PC-9 (cell line): ENCODE measurements at regions of chr21 and their contacts with region 1.

Region 1: GRCh38 chr21:41630249-41630648 is 122.3 kb upstream of the TMPRSS2 start:
- DNase-seq: peak; percentile 87 to 100
- H3K4me3 ChIP-seq: no peak overlapping the region
- H3K27ac ChIP-seq: peak overlapping the region; percentile 94
- H3K4me1 ChIP-seq: peaks cover 50% of the 10 kb centered on the region
- H3K27me3 ChIP-seq: no peaks in the 10 kb centered on the region
- CTCF ChIP-seq: no peak

Region 2: GRCh38 chr21:41431788-41432548 is 198.3 kb before region 1 on chr21:
- CTCF ChIA-PET with region 1: no interaction called
- POLR2A ChIA-PET with region 1: no interaction called
- intact Hi-C with region 1: no loop called
- DNase-seq: no peak
- H3K4me3 ChIP-seq: no peak overlapping the region
- H3K27ac ChIP-seq: no peak overlapping the region
- H3K4me1 ChIP-seq: no peaks in the 10 kb centered on the region
- H3K27me3 ChIP-seq: no peaks in the 10 kb centered on the region
- CTCF ChIP-seq: no peak

Region 3: GRCh38 chr21:41641821-41642701 is 11.8 kb after region 1 on chr21:
- CTCF ChIA-PET with region 1: interaction called, 3 read pairs
- POLR2A ChIA-PET with region 1: no interaction called
- intact Hi-C with region 1: loop called (anchors 1 kb)
- DNase-seq: peak; percentile 58 to 93
- H3K4me3 ChIP-seq: peak overlapping the region; percentile 44; the same call in 1 of the 2 replicates
- H3K27ac ChIP-seq: peak overlapping the region; percentile 100
- H3K4me1 ChIP-seq: peaks cover 75% of the 10 kb centered on the region
- H3K27me3 ChIP-seq: no peaks in the 10 kb centered on the region
- CTCF ChIP-seq: no peak

Region 4: GRCh38 chr21:41684381-41685245 is 54.4 kb after region 1 on chr21:
- CTCF ChIA-PET with region 1: interaction called, 6 read pairs
- POLR2A ChIA-PET with region 1: interaction called, 3 read pairs
- intact Hi-C with region 1: loop called (anchors 1 kb)
- DNase-seq: peak; percentile 69 to 92
- H3K4me3 ChIP-seq: peak overlapping the region; percentile 7; the same call in 1 of the 2 replicates
- H3K27ac ChIP-seq: peak overlapping the region; percentile 99
- H3K4me1 ChIP-seq: peaks cover 77% of the 10 kb centered on the region
- H3K27me3 ChIP-seq: no peaks in the 10 kb centered on the region
- CTCF ChIP-seq: no peak

Region 5: DNA sequence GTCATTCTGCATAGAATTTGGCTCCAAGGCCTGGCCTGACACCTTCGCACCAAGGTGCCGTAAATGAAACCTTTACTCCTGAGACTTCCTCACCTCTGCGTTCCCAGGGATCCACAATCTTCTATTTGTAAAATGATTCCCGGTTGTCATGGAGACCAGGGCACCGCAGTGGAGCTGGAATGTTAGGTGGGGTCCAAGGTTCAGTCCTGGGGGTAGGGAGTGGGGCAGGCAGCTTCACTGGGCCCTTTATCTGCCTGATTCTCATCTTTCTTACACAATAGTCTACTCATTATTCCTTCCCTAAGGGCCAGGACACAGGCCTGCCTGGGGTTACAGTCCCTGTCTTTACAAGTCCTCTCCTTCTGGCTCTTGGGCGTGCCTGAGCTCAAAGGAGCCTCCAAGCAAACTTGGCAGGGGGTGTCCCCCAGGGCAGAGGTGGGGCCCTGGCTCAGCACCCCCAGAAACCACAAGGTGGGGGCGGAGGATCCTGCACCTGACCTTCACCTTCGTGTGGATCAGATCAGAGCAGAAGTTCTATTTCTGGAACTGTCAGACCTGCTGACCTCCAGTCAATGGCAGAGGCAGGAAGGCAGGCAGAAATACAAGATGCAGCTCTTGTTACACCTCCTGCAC is 85.5 kb after region 1 on chr21:
- CTCF ChIA-PET with region 1: no interaction called
- POLR2A ChIA-PET with region 1: interaction called, 3 read pairs
- intact Hi-C with region 1: loop called (anchors 1 kb)
- DNase-seq: peak; percentile 95 to 98
- H3K4me3 ChIP-seq: no peak overlapping the region
- H3K27ac ChIP-seq: peak overlapping the region; percentile 93
- H3K4me1 ChIP-seq: peaks cover 49% of the 10 kb centered on the region
- H3K27me3 ChIP-seq: no peaks in the 10 kb centered on the region
- CTCF ChIP-seq: no peak

Region 6: DNA sequence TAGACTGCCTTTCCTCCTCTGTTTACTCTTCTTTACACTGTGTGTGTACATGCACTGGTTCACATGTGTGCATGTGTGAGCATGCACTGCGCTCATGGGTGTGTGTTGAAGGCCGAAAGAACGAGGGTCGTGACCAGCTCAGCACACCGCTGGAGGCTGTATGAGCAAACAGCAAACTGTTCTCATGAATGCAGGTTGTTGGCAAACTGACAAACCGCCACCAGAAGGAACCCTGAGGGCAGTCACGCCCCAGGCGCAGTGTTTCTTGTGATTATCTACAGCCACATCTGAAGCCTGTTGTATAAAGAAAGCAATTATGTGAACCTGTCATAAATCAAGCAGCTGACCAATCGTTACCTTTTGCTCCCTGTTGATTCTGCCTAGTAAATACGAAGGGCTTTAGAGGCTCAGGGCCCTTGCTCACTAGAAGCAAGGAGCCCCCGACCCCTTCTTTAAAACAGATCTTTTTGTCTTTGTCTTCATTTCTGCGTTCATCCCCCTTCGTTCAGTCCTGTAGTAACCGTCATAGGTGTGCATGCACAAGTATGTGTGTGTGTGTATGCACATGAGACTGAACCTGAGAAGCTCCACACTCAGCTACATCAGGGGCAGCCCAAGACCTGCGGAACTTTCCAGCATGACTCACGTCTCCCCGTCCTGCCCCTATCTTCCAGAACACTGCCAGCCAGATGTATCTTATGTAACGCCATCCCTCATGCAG is 153.4 kb after region 1 on chr21:
- CTCF ChIA-PET with region 1: interaction called, 5 read pairs
- POLR2A ChIA-PET with region 1: interaction called, 6 read pairs
- intact Hi-C with region 1: loop called (anchors 1 kb)
- DNase-seq: peak; percentile 95
- H3K4me3 ChIP-seq: peak overlapping the region; percentile 13; the same call in 1 of the 2 replicates
- H3K27ac ChIP-seq: peak overlapping the region; percentile 99
- H3K4me1 ChIP-seq: peaks cover 57% of the 10 kb centered on the region
- H3K27me3 ChIP-seq: no peaks in the 10 kb centered on the region
- CTCF ChIP-seq: no peak